ENCODE measurements at regions of chrX and their contacts with region 1.

Region 1: GRCh38 chrX:56995271-56995994 is at the start of gene SPIN3:
- DNase-seq: peak; percentile 15 to 67 (median 48)
- ATAC-seq: peak; percentile 81
- H3K4me3 ChIP-seq: peak within 1 kb of the TSS; percentile 50
- H3K4me3 Mint-ChIP-seq: peak within 1 kb of the TSS; percentile 91 to 98 (median 95)
- H3K27ac ChIP-seq: peak within 1 kb of the TSS; percentile 42
- H3K27ac Mint-ChIP-seq: peak within 1 kb of the TSS; percentile 90 to 97 (median 93)
- H3K4me1 ChIP-seq: peaks cover 0 to 4% of the 10 kb centered on the region in 2 donors
- H3K4me1 Mint-ChIP-seq: peaks cover 11 to 58% (median 38%) of the 10 kb centered on the region in 7 donors
- H3K27me3 ChIP-seq: no peaks in the 10 kb centered on the region
- H3K27me3 Mint-ChIP-seq: no peaks in the 10 kb centered on the region
- total RNA-seq, gene SPIN3: 8.8 to 24.2 (median 13.5) TPM

Region 2: DNA sequence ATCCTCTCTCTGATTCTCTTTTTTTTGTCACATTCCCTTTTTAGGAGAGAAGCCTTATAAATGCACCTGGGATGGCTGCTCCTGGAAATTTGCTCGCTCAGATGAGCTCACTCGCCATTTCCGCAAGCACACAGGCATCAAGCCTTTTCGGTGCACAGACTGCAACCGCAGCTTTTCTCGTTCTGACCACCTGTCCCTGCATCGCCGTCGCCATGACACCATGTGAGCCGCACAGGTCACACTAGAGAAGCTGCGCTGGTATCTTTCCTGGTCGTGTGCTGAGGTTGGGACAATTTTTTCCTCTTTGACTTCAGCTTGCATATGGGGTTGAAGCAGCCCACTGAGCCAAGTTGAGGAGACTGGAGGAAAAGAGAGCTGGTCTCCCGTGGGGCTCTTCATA is 711.2 kb before region 1 on chrX:
- CTCF ChIA-PET with region 1: no interaction called
- POLR2A ChIA-PET with region 1: no interaction called
- intact Hi-C with region 1: no loop called
- DNase-seq: no peak
- ATAC-seq: no peak
- H3K4me3 ChIP-seq: no peak overlapping the region
- H3K4me3 Mint-ChIP-seq: no peak overlapping the region
- H3K27ac ChIP-seq: no peak overlapping the region
- H3K27ac Mint-ChIP-seq: no peak overlapping the region
- H3K4me1 ChIP-seq: peaks cover 0 to 3% of the 10 kb centered on the region in 2 donors
- H3K4me1 Mint-ChIP-seq: peaks cover 2 to 14% (median 10%) of the 10 kb centered on the region in 7 donors
- H3K27me3 ChIP-seq: no peaks in the 10 kb centered on the region
- H3K27me3 Mint-ChIP-seq: no peaks in the 10 kb centered on the region

Region 3: DNA sequence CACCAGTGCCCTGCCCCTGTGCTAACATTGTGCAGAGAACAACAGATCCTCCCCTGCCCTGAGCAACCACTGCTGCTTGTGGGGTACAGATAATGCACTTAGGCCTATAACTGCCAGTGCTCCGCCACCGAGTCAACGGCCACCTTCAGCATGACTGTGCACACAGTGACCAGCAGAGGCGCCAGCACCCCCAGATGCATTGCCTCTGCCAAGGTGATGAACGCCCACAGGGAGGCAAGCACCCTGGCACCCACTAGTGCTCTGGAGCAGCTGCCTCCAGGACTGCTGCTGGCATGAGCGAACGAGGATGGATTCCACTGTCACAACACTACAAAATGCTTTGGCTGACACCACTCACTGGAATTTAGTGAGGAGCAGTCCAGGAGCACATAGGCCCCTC is 87.7 kb after region 1 on chrX:
- CTCF ChIA-PET with region 1: no interaction called
- POLR2A ChIA-PET with region 1: no interaction called
- intact Hi-C with region 1: no loop called
- DNase-seq: no peak
- ATAC-seq: no peak
- H3K4me3 ChIP-seq: no peak overlapping the region
- H3K4me3 Mint-ChIP-seq: no peak overlapping the region
- H3K27ac ChIP-seq: no peak overlapping the region
- H3K27ac Mint-ChIP-seq: no peak overlapping the region
- H3K4me1 ChIP-seq: no peaks in the 10 kb centered on the region
- H3K4me1 Mint-ChIP-seq: peaks cover 0 to 2% (median 0%) of the 10 kb centered on the region in 7 donors
- H3K27me3 ChIP-seq: no peaks in the 10 kb centered on the region
- H3K27me3 Mint-ChIP-seq: no peaks in the 10 kb centered on the region

Region 4: DNA sequence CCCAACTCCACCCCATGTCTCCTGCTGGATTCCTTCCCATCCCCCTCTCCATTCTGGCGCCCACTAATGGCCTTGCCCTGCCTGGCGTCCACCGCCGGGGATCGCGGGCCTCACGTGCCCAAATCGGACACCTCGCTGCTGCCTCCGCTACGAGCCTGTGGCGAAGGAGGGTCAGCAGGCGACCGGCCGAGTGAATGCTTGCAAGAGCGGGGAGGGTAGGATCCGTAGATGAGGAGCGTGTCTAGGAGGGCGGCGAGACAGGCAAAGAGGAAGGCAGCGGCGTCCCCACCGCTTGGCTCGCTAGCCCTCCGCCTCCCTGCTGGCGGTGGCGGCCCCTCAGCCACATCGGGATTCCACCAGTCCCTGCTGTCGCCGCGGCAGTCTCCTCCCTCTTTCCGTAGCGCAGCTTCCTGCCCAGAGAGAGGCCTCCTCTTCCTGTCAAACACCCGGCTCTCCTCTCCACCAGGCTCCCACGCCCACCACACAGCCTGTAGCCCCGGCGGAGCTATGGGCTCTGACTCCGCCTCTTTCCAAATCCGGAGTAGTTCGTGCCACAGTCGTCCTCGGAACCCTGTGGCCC is 125.8 kb after region 1 on chrX and contains the start of gene SPIN2B:
- CTCF ChIA-PET with region 1: no interaction called
- POLR2A ChIA-PET with region 1: interaction called, 3 read pairs
- intact Hi-C with region 1: loop called (anchors 1 to 2 kb)
- DNase-seq: peak; percentile 27 to 76 (median 68)
- ATAC-seq: peak; percentile 99
- H3K4me3 ChIP-seq: peak within 1 kb of the TSS; percentile 57
- H3K4me3 Mint-ChIP-seq: peak within 1 kb of the TSS; percentile 90 to 95 (median 93)
- H3K27ac ChIP-seq: peak within 1 kb of the TSS; percentile 62
- H3K27ac Mint-ChIP-seq: peak within 1 kb of the TSS; percentile 72 to 96 (median 91)
- H3K4me1 ChIP-seq: no peaks in the 10 kb centered on the region
- H3K4me1 Mint-ChIP-seq: peaks cover 5 to 14% (median 11%) of the 10 kb centered on the region in 7 donors
- H3K27me3 ChIP-seq: no peaks in the 10 kb centered on the region
- H3K27me3 Mint-ChIP-seq: no peaks in the 10 kb centered on the region
- total RNA-seq, gene SPIN2B: 9.0 to 19.7 (median 14.0) TPM

Measured in naive thymus-derived CD4-positive, alpha-beta T cell (primary cell).